Mammary epithelial cell (primary cell): ENCODE measurements at regions of chr20 and their contacts with region 1.

Region 1: DNA sequence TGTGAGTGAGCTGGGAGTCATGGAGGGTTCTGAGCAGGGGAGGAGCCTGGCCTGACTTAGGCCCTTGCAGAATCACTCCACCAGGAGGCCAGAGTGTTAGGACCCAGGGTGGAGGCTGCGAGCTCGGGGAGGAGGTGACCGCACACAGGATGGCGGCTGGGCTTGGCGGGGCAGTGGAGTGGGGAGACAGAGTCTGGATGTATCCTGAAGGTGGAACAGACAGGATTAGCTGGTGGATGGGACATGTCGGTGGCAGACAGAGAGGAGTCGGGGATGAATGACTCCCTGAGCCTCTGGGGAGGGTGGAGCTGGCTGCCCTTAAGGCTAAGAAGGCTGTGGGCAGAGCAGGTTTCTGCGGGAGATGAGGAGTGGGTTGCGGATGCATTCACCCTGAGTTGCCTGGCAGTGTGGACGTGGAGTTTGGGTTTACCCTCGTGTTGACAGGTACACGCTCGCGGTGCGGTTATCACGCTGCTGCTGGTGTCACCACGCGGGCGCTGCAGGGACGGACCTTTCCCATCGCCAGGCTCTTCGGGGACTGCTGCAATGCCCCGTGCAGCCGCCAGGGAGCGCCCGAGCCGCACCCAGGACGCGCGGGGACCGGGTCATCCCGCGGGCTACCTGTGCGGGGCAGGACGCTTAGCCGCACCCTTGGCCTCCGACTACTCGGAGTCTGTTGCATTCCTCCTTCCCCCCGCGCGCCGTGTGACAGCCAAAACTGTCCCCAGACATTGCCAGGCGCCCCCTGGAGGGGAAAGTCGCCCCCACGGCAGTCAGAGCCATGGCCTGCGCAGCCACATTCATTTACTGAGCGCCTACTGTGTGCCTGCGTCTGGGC is 43.0 kb upstream of the PTGIS start:
- DNase-seq: peak; percentile 54
- H3K4me3 ChIP-seq: peak overlapping the region; percentile 9 to 34 (median 19)
- H3K27ac ChIP-seq: no peak overlapping the region
- H3K4me1 ChIP-seq: peaks cover 5% of the 10 kb centered on the region
- H3K27me3 ChIP-seq: no peaks in the 10 kb centered on the region
- CTCF ChIP-seq: peak; percentile 94 to 99

Region 2: GRCh38 chr20:49338061-49338460 is 272.9 kb before region 1 on chr20:
- CTCF ChIA-PET with region 1: no interaction called
- dilution Hi-C with region 1: no loop called
- in situ Hi-C with region 1: no loop called
- intact Hi-C with region 1: loop called (anchors 1 kb)
- DNase-seq: no peak
- H3K4me3 ChIP-seq: no peak overlapping the region
- H3K27ac ChIP-seq: no peak overlapping the region
- H3K4me1 ChIP-seq: no peaks in the 10 kb centered on the region
- H3K27me3 ChIP-seq: no peaks in the 10 kb centered on the region
- CTCF ChIP-seq: no peak

Region 3: GRCh38 chr20:49713753-49714712 is 103.1 kb after region 1 on chr20 and contains the start of gene B4GALT5:
- CTCF ChIA-PET with region 1: interaction called, 4 read pairs
- dilution Hi-C with region 1: no loop called
- in situ Hi-C with region 1: no loop called
- intact Hi-C with region 1: loop called (anchors 2 kb)
- DNase-seq: no peak
- H3K4me3 ChIP-seq: peak within 1 kb of the TSS; percentile 69 to 89 (median 89)
- H3K27ac ChIP-seq: peak within 1 kb of the TSS; percentile 68
- H3K4me1 ChIP-seq: peaks cover 16% of the 10 kb centered on the region
- H3K27me3 ChIP-seq: no peaks in the 10 kb centered on the region
- CTCF ChIP-seq: no peak
- total RNA-seq, gene B4GALT5: 22.7 to 22.8 TPM

Region 4: DNA sequence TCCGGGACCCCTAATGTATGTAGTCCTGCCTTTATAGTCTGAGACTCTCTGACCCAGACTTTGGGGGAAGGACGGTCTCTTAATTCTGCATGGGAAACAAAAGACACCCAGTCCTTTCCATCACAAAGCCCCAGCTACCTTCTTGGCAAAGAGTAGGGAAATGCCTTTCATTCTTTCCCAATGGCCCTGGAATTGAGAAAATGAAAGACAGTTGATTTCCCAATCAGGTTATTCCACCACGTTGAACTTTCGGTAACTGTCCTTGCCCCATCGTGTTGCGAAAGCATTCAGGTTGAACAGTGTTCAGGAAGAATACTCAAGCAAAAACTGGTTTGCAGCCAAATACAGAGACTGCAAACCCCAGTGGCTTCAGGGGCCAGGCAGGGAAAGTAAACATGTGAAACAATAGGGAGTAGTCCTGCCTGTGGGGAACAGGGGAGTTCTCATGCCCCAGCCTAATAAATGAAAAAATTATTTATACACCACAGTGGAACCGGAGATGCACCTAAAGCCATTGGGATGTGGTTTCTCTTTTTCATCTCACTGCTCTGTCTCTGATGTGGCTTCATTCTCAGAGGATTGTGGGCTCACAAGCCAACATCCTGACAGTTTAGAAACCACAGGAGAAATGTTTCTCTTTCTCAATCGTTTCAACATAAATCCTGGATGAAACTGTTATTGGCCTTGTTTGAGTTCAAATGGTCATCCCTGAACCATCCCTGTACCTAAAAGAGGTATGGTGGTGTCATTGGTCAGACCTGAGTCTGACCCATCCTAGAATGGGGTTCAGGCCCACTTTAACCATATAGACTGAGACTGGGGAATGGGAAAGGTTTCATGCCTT is 157.5 kb after region 1 on chr20:
- CTCF ChIA-PET with region 1: no interaction called
- dilution Hi-C with region 1: loop called (anchors 5 kb)
- in situ Hi-C with region 1: no loop called
- intact Hi-C with region 1: no loop called
- DNase-seq: peak; percentile 97
- H3K4me3 ChIP-seq: no peak overlapping the region
- H3K27ac ChIP-seq: peak overlapping the region; percentile 44
- H3K4me1 ChIP-seq: peaks cover 36% of the 10 kb centered on the region
- H3K27me3 ChIP-seq: no peaks in the 10 kb centered on the region
- CTCF ChIP-seq: no peak

Region 5: DNA sequence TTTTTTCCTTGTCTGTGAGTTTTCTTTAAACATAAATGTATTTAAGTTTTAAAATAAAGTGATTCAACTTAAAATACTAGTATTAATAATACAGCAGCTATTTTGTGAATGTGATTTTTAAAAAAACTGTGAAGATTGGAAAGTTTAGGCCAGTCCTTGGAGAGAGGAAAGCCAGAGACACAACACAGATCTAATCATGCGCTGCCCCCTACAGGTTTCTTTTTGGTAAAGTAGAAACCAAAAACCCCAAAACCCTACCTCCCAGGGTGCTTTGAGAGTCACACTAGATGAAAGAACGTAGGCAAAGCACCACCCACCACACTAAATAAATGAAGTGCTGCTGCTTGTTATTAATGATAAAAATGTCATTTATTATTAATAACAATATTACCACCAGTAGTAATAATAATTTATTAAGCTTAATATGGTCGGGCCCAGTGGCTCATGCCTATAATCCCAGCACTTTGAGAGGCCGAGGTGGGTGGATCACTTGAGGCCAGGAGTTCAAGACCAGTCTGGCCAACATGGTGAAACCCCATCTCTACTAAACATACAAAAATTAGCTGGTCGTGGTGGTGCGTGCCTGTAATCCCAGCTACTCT is 235.4 kb after region 1 on chr20:
- CTCF ChIA-PET with region 1: interaction called, 4 read pairs
- dilution Hi-C with region 1: no loop called
- in situ Hi-C with region 1: loop called (anchors 5 to 25 kb)
- intact Hi-C with region 1: loop called (anchors 1 kb)
- DNase-seq: peak; percentile 48
- H3K4me3 ChIP-seq: no peak overlapping the region
- H3K27ac ChIP-seq: no peak overlapping the region
- H3K4me1 ChIP-seq: peaks cover 15% of the 10 kb centered on the region
- H3K27me3 ChIP-seq: no peaks in the 10 kb centered on the region
- CTCF ChIP-seq: peak; percentile 46 to 65

Region 6: DNA sequence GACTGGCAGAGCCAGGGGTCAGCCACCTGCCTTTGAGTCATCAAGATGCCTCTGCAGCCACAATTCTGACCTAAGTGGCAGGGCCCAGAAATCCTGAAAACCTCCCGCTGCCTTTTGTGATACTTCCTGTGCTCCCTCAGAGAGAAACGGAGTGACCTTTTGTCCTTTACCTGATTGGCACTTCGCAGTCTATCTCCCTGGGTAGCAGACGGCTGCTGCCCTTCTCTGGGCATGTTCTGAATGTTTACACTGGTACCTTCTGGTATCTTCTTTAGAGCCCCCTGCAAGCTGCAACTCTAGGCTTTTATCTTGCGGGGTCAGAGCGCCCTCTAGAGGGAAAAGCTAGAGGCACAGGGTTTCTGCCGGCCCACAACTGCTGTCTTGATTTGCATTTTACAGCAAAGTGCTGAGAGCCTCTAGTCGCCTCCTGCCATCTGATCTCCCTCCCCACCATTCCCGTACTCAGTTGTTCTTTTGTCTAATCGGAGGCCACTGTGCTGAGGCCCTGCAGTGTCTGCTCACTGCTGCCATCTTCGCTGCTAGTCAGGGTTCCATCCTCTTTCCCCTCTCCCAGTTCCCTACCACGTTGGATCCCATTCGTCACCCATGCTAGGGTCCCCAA is 277.5 kb after region 1 on chr20:
- CTCF ChIA-PET with region 1: no interaction called
- dilution Hi-C with region 1: no loop called
- in situ Hi-C with region 1: no loop called
- intact Hi-C with region 1: loop called (anchors 1 kb)
- DNase-seq: peak; percentile 19
- H3K4me3 ChIP-seq: no peak overlapping the region
- H3K27ac ChIP-seq: no peak overlapping the region
- H3K4me1 ChIP-seq: no peaks in the 10 kb centered on the region
- H3K27me3 ChIP-seq: no peaks in the 10 kb centered on the region
- CTCF ChIP-seq: peak; percentile 73 to 79